PC-9 (cell line): ENCODE measurements at regions of chr12 and their contacts with region 1.

Region 1: GRCh38 chr12:122471324-122472226 is 29.2 kb downstream of the ZCCHC8 start:
- DNase-seq: peak in 1 of 2 experiments; percentile 54
- H3K4me3 ChIP-seq: no peak overlapping the region
- H3K27ac ChIP-seq: peak overlapping the region; percentile 56
- H3K4me1 ChIP-seq: peaks cover 18% of the 10 kb centered on the region
- H3K27me3 ChIP-seq: no peaks in the 10 kb centered on the region
- CTCF ChIP-seq: peak; percentile 86

Region 2: DNA sequence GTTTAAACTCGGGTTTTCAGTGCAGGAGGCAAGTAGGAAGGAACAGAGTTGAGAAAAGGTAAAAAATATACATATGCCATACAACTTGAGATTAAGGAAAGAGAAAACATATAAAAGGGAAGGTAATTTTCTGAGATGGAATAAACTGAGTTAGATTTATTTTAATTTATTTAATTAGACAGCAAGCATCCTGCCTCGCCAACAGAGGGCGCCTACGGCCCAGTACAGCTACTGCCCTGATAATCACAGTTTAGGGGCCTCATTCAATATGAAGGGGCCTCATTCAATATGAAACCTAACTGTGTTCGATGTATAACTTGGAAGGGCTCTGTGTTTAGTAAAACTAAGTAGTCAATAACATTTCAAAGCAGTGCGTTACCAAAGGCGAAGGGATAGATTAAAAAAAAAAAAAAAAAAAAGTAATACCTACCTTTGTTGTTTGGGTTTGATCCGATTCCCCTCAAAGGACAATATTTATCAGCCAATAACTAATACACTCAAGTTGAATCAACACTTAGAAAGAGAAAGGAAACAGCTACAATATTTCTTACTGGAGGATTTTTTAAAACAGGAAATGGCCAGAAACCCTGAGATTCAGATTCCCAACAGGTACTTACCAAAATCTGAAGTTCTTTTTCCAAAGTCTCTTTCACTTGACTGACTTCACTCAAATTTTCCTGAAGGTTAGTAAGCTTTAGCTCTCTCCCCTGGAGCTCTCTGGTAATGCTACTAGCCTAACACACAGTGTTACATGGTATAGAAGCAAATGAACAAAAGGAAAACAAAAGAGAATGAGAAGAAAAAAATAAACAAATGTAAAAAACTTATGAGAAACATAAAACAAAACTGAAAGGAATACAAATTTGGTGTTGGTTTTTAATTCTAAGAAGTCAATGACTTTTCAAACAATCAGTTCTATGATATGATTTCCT is 135.3 kb before region 1 on chr12:
- CTCF ChIA-PET with region 1: interaction called, 10 read pairs
- POLR2A ChIA-PET with region 1: no interaction called
- intact Hi-C with region 1: loop called (anchors 1 kb)
- DNase-seq: peak in 1 of 2 experiments; percentile 29
- H3K4me3 ChIP-seq: no peak overlapping the region
- H3K27ac ChIP-seq: peak overlapping the region; percentile 36
- H3K4me1 ChIP-seq: no peaks in the 10 kb centered on the region
- H3K27me3 ChIP-seq: no peaks in the 10 kb centered on the region
- CTCF ChIP-seq: peak; percentile 87

Region 3: DNA sequence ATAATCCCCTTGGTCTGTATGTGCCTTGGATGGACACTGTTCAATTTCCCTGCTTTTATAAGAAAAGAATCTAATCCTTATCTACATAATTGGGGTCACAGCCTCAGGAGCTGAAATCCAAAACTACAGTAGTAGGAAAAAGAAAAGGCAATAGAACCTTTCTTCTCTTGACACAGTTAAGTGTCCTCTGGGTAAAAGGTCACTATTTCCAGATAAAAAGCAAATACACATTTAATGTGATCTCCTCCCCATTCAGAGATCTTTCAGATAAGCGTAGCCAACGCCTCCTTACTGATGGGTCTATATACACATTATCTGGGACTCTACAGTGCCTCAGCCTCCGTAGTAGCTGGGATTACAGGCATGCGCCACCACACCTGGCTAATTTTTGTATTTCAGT is 122.5 kb before region 1 on chr12:
- CTCF ChIA-PET with region 1: interaction called, 10 read pairs
- POLR2A ChIA-PET with region 1: no interaction called
- intact Hi-C with region 1: no loop called
- DNase-seq: no peak
- H3K4me3 ChIP-seq: no peak overlapping the region
- H3K27ac ChIP-seq: no peak overlapping the region
- H3K4me1 ChIP-seq: no peaks in the 10 kb centered on the region
- H3K27me3 ChIP-seq: no peaks in the 10 kb centered on the region
- CTCF ChIP-seq: no peak

Region 4: GRCh38 chr12:122399592-122400373 is 71.8 kb before region 1 on chr12:
- CTCF ChIA-PET with region 1: interaction called, 35 read pairs
- POLR2A ChIA-PET with region 1: interaction called, 30 read pairs
- intact Hi-C with region 1: loop called (anchors 1 kb)
- DNase-seq: peak; percentile 82 to 90
- H3K4me3 ChIP-seq: peak overlapping the region; percentile 46; the same call in 1 of the 2 replicates
- H3K27ac ChIP-seq: peak overlapping the region; percentile 100
- H3K4me1 ChIP-seq: peaks cover 26% of the 10 kb centered on the region
- H3K27me3 ChIP-seq: no peaks in the 10 kb centered on the region
- CTCF ChIP-seq: peak; percentile 80

Region 5: GRCh38 chr12:122421821-122422729 is 49.5 kb before region 1 on chr12 and contains the start of gene CLIP1:
- CTCF ChIA-PET with region 1: interaction called, 9 read pairs
- POLR2A ChIA-PET with region 1: interaction called, 3 read pairs
- intact Hi-C with region 1: loop called (anchors 1 kb)
- DNase-seq: peak; percentile 67 to 83
- H3K4me3 ChIP-seq: peak within 1 kb of the TSS; percentile 71
- H3K27ac ChIP-seq: peak within 1 kb of the TSS; percentile 96
- H3K4me1 ChIP-seq: peaks cover 30% of the 10 kb centered on the region
- H3K27me3 ChIP-seq: no peaks in the 10 kb centered on the region
- CTCF ChIP-seq: peak; percentile 38; the same call in 1 of the 2 replicates
- total RNA-seq, gene CLIP1: 80.8 and 86.9 TPM in 2 replicates

Region 6: DNA sequence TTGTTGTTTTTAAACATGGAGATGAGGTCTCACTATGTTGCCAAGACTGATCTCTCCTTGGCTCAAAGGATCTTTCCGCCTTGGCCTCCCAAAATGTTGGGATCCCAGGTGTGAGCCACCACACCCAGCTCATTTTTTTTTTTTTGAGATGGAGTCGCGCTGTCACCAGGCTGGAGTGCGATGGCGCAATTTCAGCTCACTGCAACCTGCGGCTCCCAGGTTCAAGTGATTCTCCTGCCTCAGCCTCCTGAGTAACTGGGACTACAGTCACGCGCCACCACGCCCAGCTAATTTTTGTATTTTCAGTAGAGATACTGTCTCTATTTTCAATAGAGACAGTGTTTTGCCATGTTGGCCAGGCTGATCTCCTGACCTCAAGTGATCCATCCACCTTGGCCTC is 44.2 kb before region 1 on chr12:
- CTCF ChIA-PET with region 1: interaction called, 11 read pairs
- POLR2A ChIA-PET with region 1: no interaction called
- intact Hi-C with region 1: loop called (anchors 1 kb)
- DNase-seq: no peak
- H3K4me3 ChIP-seq: no peak overlapping the region
- H3K27ac ChIP-seq: no peak overlapping the region
- H3K4me1 ChIP-seq: peaks cover 7% of the 10 kb centered on the region; the same call in 1 of the 2 replicates
- H3K27me3 ChIP-seq: no peaks in the 10 kb centered on the region
- CTCF ChIP-seq: no peak

Region 7: GRCh38 chr12:122437656-122438121 is 33.9 kb before region 1 on chr12:
- CTCF ChIA-PET with region 1: no interaction called
- POLR2A ChIA-PET with region 1: interaction called, 13 read pairs
- intact Hi-C with region 1: no loop called
- DNase-seq: no peak
- H3K4me3 ChIP-seq: no peak overlapping the region
- H3K27ac ChIP-seq: no peak overlapping the region
- H3K4me1 ChIP-seq: 0 out of 2 replicates have a peak, but pooled peaks cover 4% of the 10 kb centered on the region
- H3K27me3 ChIP-seq: no peaks in the 10 kb centered on the region
- CTCF ChIP-seq: no peak